ENCODE measurements at regions of chr18 and their contacts with region 1.

Region 1: DNA sequence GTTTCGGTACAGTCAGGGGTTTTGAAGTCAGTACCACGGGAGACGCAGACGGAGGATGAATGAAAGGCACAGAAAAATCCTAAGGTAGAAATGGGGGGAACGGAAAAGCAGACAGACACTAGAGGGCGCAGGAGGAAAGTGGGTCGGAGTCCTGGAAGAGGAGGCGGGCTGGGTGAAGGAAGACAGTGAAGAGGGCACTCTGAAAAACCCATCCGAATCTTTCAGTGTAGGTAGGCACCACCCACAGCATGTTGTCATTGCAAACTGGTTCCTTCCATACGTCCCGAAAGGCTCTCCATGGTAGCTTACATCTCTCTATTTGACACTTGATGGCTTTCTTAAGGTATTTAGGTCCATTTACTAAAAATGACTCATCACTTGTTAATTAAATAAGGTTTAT is 18.5 kb upstream of the ZNF236 start:
- DNase-seq: peak; percentile 84
- H3K4me3 Mint-ChIP-seq: no peak overlapping the region
- H3K27ac Mint-ChIP-seq: no peak overlapping the region
- H3K4me1 Mint-ChIP-seq: peaks cover 29% of the 10 kb centered on the region
- H3K27me3 Mint-ChIP-seq: no peaks in the 10 kb centered on the region
- CTCF ChIP-seq: peak; percentile 74

Region 2: GRCh38 chr18:76492669-76493212 is 311.1 kb before region 1 on chr18:
- CTCF ChIA-PET with region 1: no interaction called
- POLR2A ChIA-PET with region 1: no interaction called
- intact Hi-C with region 1: no loop called
- DNase-seq: peak; percentile 98
- H3K4me3 Mint-ChIP-seq: peak overlapping the region; percentile 73
- H3K27ac Mint-ChIP-seq: peak overlapping the region; percentile 66
- H3K4me1 Mint-ChIP-seq: peaks cover 17% of the 10 kb centered on the region
- H3K27me3 Mint-ChIP-seq: no peaks in the 10 kb centered on the region
- CTCF ChIP-seq: no peak

Region 3: GRCh38 chr18:76783759-76784484 is 19.9 kb before region 1 on chr18:
- CTCF ChIA-PET with region 1: interaction called, 57 read pairs
- POLR2A ChIA-PET with region 1: interaction called, 3 read pairs
- intact Hi-C with region 1: no loop called
- DNase-seq: no peak
- H3K4me3 Mint-ChIP-seq: no peak overlapping the region
- H3K27ac Mint-ChIP-seq: no peak overlapping the region
- H3K4me1 Mint-ChIP-seq: no peaks in the 10 kb centered on the region
- H3K27me3 Mint-ChIP-seq: peaks cover 12% of the 10 kb centered on the region
- CTCF ChIP-seq: no peak

Region 4: GRCh38 chr18:76847916-76848315 is 44.1 kb after region 1 on chr18:
- CTCF ChIA-PET with region 1: interaction called, 21 read pairs
- POLR2A ChIA-PET with region 1: interaction called, 4 read pairs
- intact Hi-C with region 1: no loop called
- DNase-seq: peak; percentile 13
- H3K4me3 Mint-ChIP-seq: no peak overlapping the region
- H3K27ac Mint-ChIP-seq: no peak overlapping the region
- H3K4me1 Mint-ChIP-seq: no peaks in the 10 kb centered on the region
- H3K27me3 Mint-ChIP-seq: no peaks in the 10 kb centered on the region
- CTCF ChIP-seq: no peak

Region 5: DNA sequence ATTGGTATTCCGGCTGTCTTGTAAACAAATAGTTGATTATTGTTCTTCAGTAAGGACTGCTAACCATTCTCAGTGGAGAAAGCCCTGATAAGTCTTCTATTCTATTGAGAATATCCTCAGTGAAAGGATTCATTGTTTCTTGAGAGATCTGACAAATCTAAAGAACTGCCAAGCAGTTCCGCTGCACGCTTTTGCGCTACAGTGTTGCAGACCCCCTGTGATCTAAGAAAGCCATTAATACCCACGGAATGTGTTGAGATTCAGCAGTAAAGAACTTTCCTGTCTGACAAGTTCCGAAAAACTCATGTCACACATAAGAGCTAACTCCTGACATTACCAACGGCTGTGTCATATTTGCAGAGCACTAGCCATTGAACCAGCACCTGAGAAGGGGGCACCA is 82.3 kb after region 1 on chr18:
- CTCF ChIA-PET with region 1: interaction called, 11 read pairs
- POLR2A ChIA-PET with region 1: interaction called, 3 read pairs
- intact Hi-C with region 1: no loop called
- DNase-seq: no peak
- H3K4me3 Mint-ChIP-seq: no peak overlapping the region
- H3K27ac Mint-ChIP-seq: no peak overlapping the region
- H3K4me1 Mint-ChIP-seq: no peaks in the 10 kb centered on the region
- H3K27me3 Mint-ChIP-seq: no peaks in the 10 kb centered on the region
- CTCF ChIP-seq: no peak

Region 6: DNA sequence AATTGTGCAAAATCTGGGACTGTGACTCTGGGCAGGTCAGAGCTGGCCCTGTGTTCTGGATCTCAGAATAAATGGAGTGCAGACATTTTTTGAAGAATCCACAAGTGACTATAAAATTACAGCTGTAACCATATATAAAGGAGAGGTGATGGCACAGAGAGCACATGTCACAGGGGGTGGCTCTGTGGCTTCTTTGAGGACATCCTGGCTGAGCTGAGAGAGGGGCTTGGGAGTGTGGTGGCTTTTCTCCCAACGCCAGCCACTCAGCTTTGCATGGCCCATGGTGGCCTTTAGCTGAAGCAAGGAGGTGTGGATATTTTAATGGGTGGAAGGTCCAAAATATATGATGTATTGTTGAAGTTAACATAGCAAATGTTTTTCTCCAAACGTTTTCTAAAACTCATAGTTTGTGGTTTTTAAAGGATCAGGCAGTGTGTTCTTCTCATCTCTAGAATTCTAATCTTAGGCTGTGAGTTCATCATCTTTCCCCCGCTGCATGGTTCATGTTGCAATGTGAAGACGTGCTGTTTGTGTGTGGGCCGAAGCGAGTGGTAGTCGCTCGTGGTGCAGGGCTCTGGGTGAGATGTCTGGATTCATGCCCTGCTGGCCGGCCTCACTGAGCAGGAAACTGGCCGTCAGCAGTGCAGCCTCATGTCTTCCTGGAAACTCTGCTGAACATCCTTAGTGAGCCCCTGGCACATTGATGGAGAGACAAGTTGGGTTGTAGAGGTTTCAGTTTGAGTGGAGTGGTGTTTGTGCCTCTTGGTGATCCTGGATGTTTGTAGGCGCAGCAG is 128.4 kb after region 1 on chr18:
- CTCF ChIA-PET with region 1: interaction called, 13 read pairs
- POLR2A ChIA-PET with region 1: no interaction called
- intact Hi-C with region 1: no loop called
- DNase-seq: no peak
- H3K4me3 Mint-ChIP-seq: no peak overlapping the region
- H3K27ac Mint-ChIP-seq: no peak overlapping the region
- H3K4me1 Mint-ChIP-seq: no peaks in the 10 kb centered on the region
- H3K27me3 Mint-ChIP-seq: no peaks in the 10 kb centered on the region
- CTCF ChIP-seq: no peak

Region 7: GRCh38 chr18:76982841-76983587 is 179.2 kb after region 1 on chr18:
- CTCF ChIA-PET with region 1: interaction called, 148 read pairs
- POLR2A ChIA-PET with region 1: interaction called, 13 read pairs
- intact Hi-C with region 1: loop called (anchors 1 kb)
- DNase-seq: peak; percentile 86
- H3K4me3 Mint-ChIP-seq: peak overlapping the region; percentile 50
- H3K27ac Mint-ChIP-seq: no peak overlapping the region
- H3K4me1 Mint-ChIP-seq: peaks cover 5% of the 10 kb centered on the region
- H3K27me3 Mint-ChIP-seq: peaks cover 4% of the 10 kb centered on the region
- CTCF ChIP-seq: peak; percentile 89

Region 8: DNA sequence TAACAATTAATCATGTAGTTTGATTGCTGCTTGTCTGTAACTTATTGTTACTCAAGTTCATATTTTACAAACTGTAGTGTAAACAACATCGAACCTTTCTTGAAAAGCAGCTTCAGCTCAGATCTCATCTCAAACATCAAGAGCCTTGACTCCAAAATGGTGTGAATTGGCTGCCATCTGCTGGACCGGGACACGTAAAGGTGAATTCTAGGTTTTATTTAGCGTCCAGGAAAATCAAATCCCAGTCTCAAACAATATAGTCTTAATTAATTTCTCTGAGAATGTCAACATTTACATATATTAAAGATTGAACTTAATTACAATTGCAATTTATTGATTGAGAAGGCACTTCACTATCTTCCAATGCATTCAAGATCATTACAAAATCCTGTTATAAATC is 898.9 kb after region 1 on chr18:
- CTCF ChIA-PET with region 1: interaction called, 6 read pairs
- POLR2A ChIA-PET with region 1: no interaction called
- intact Hi-C with region 1: loop called (anchors 2 kb)
- DNase-seq: peak; percentile 44
- H3K4me3 Mint-ChIP-seq: no peak overlapping the region
- H3K27ac Mint-ChIP-seq: no peak overlapping the region
- H3K4me1 Mint-ChIP-seq: no peaks in the 10 kb centered on the region
- H3K27me3 Mint-ChIP-seq: peaks cover 43% of the 10 kb centered on the region
- CTCF ChIP-seq: peak; percentile 57

Measured in MCF 10A (cell line).